PC-9 (cell line): ENCODE measurements at regions of chr6 and their contacts with region 1.

Region 1: DNA sequence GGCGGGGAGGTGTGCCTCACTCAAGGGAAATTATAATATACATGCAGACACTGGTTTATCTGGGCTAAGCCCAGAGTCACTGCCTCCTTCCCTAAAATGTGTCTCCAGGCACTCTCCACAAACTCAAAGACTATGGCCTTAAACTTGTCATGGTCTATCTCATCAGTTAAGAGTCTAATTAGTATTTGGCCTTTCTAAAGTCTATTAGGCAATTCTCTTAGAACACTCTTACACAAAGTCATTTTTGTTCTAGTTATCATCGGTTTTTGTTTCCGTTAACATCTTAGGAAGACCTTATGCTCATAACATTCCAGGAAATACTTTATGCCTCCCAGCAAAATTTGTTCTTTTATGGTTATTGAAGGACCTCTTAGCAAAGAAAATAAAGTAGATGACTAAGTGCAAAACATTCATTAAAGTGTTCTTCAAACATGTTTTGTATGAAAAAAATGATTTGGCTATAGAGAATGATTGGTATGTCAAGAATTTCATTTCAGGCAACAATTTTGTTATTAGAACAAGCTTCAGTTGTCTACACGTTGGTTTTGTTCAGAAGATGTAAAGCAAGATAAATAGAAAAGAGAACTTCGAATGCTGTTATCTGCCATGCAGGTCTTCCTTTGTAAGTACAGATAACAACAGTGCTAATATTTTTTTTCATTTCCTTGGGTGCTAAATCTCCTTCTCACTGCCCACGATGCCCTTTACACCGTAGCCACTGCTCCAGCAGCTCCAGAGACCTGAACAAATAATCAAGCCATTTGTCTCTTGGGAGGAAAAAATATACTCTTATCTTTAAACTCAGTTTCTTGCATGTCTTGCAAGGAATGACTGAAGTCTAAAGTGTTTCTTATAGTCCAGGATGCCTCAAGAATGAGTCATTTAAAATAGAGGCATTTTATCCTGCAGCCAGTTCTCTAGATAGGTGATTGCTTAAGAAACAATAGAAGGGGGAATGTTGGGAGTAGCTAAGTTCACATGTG is 170.4 kb downstream of the HTR1B start:
- DNase-seq: peak; percentile 40 to 44
- H3K4me3 ChIP-seq: no peak overlapping the region
- H3K27ac ChIP-seq: no peak overlapping the region
- H3K4me1 ChIP-seq: no peaks in the 10 kb centered on the region
- H3K27me3 ChIP-seq: no peaks in the 10 kb centered on the region
- CTCF ChIP-seq: no peak

Region 2: GRCh38 chr6:77034161-77034560 is 258.7 kb before region 1 on chr6:
- CTCF ChIA-PET with region 1: no interaction called
- POLR2A ChIA-PET with region 1: no interaction called
- intact Hi-C with region 1: loop called (anchors 5 kb)
- DNase-seq: peak in 1 of 2 experiments; percentile 42
- H3K4me3 ChIP-seq: no peak overlapping the region
- H3K27ac ChIP-seq: no peak overlapping the region
- H3K4me1 ChIP-seq: no peaks in the 10 kb centered on the region
- H3K27me3 ChIP-seq: no peaks in the 10 kb centered on the region
- CTCF ChIP-seq: no peak

Region 3: DNA sequence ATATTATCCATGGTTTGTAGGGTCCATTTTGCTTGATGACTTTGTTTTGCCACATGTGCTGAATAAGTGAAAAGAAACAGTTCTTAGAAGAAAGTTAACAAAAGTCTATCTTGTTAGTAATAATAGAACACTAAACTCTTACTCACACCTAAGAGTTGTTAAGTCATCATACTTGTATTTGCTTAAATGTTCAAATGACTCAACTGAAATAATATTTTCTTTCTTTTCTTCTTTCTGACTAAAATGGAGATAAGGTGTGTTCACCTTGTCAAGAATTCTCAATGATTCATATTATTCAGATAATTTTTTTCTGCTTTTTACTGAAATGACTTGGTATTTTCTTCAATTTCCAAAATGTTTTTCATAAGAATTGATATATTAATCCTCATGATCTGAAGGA is 156.8 kb before region 1 on chr6:
- CTCF ChIA-PET with region 1: no interaction called
- POLR2A ChIA-PET with region 1: no interaction called
- intact Hi-C with region 1: loop called (anchors 2 kb)
- DNase-seq: no peak
- H3K4me3 ChIP-seq: no peak overlapping the region
- H3K27ac ChIP-seq: no peak overlapping the region
- H3K4me1 ChIP-seq: no peaks in the 10 kb centered on the region
- H3K27me3 ChIP-seq: no peaks in the 10 kb centered on the region
- CTCF ChIP-seq: no peak

Region 4: DNA sequence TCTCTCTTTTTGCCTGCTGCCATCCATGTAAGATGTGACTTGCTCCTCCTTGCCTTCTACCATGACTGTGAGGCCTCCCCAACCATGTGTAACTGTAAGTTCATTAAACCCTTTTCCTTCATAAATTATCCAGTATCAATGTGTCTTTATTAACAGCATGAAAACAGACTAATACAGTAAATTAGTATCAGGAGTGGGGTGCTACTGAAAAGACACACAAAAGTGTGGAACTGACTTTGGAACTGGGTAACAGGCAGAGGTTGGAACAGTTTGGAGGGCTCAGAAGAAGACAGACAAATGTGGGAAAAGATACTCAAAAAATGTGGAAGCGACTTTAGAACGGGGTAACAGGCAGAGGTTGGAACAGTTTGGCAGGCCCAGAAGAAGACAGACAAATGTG is 18.9 kb before region 1 on chr6:
- CTCF ChIA-PET with region 1: no interaction called
- POLR2A ChIA-PET with region 1: no interaction called
- intact Hi-C with region 1: no loop called
- DNase-seq: no peak
- H3K4me3 ChIP-seq: no peak overlapping the region
- H3K27ac ChIP-seq: no peak overlapping the region
- H3K4me1 ChIP-seq: no peaks in the 10 kb centered on the region
- H3K27me3 ChIP-seq: no peaks in the 10 kb centered on the region
- CTCF ChIP-seq: no peak

Region 5: DNA sequence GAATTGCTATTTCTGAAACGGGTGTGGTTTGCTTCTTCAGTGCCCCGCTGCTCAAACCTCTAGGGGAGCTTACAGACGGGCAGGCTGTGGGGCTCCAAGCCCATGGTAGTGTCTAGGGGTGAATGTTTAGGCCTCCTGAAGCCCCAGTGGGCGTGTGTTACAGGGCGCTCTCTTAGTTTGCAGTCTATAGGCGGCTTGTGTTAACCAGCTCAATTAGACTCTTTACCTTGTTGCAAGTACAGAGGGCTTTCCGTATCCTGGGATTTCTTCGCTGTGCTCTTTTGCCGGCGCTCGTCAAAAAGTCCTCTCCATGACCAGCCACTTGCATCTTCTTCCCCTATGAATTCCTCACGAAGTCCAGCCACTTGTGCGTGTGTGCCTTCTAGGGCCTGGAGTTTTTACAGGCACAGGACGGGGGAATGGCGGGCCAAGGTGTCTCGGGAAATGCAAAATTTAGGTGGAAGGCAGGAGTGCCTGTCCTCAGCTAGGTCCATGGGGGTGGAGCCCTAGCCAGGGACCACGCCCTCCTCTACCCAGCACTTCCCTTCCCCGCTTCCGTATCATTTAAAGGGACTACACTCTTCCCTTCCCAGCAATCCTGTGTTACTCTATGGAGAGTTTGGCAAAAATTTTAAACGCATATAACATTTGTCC is 75.9 kb after region 1 on chr6:
- CTCF ChIA-PET with region 1: no interaction called
- POLR2A ChIA-PET with region 1: no interaction called
- intact Hi-C with region 1: loop called (anchors 10 kb)
- DNase-seq: peak in 1 of 2 experiments; percentile 62
- H3K4me3 ChIP-seq: no peak overlapping the region
- H3K27ac ChIP-seq: no peak overlapping the region
- H3K4me1 ChIP-seq: no peaks in the 10 kb centered on the region
- H3K27me3 ChIP-seq: no peaks in the 10 kb centered on the region
- CTCF ChIP-seq: no peak